ENCODE measurements at regions of chr20 and their contacts with region 1.

Region 1: DNA sequence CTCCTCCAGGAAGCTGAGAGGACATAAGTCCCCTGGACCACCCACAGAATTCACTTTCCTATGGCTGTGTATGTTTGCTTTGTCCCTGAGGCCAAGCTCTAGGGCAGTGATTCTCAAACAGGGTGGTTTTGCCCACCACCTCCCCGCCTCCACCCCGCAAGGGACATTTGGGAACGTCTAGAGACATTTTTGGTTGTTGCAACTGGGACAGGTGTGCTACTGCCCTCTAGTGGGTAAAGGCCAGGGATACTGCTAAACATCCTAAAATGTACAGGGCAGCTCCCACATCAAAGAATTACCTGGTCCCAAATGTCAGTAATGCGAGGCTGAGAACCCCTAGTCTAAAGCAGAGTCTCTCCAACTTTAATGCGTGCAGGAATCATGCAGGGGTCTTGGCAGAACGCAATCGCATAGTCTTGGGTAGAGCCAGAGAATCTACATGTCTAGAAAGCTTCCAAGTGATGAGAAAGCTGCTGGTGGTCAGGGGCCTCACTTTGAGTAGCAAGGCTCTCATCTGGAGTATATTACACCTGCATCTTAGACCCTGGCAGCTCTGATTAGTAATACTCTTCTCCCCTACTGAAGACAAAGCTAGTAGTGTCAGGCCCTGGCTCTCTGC is 5.1 kb downstream of the KCNS1 start:
- DNase-seq: peak; percentile 83
- H3K4me3 Mint-ChIP-seq: no peak overlapping the region
- H3K27ac Mint-ChIP-seq: no peak overlapping the region
- H3K4me1 Mint-ChIP-seq: peaks cover 10% of the 10 kb centered on the region
- H3K27me3 Mint-ChIP-seq: peaks cover 29% of the 10 kb centered on the region

Region 2: GRCh38 chr20:44747166-44748004 is 348.5 kb before region 1 on chr20:
- CTCF ChIA-PET with region 1: interaction called, 5 read pairs
- intact Hi-C with region 1: loop called (anchors 2 kb)
- DNase-seq: peak; percentile 89
- H3K4me3 Mint-ChIP-seq: peak overlapping the region; percentile 83
- H3K27ac Mint-ChIP-seq: peak overlapping the region; percentile 80
- H3K4me1 Mint-ChIP-seq: peaks cover 17% of the 10 kb centered on the region
- H3K27me3 Mint-ChIP-seq: peaks cover 11% of the 10 kb centered on the region

Region 3: GRCh38 chr20:44966030-44966961 is 129.6 kb before region 1 on chr20 and contains the start of gene STK4:
- CTCF ChIA-PET with region 1: interaction called, 4 read pairs
- intact Hi-C with region 1: loop called (anchors 2 kb)
- DNase-seq: peak; percentile 96
- H3K4me3 Mint-ChIP-seq: peak within 1 kb of the TSS; percentile 88
- H3K27ac Mint-ChIP-seq: peak within 1 kb of the TSS; percentile 98
- H3K4me1 Mint-ChIP-seq: peaks cover 56% of the 10 kb centered on the region
- H3K27me3 Mint-ChIP-seq: no peaks in the 10 kb centered on the region
- total RNA-seq, gene STK4: 110 to 116 TPM

Region 4: GRCh38 chr20:45052698-45053429 is 43.0 kb before region 1 on chr20:
- CTCF ChIA-PET with region 1: interaction called, 45 read pairs
- intact Hi-C with region 1: no loop called
- DNase-seq: peak; percentile 20
- H3K4me3 Mint-ChIP-seq: no peak overlapping the region
- H3K27ac Mint-ChIP-seq: peak overlapping the region; percentile 80
- H3K4me1 Mint-ChIP-seq: peaks cover 80% of the 10 kb centered on the region
- H3K27me3 Mint-ChIP-seq: no peaks in the 10 kb centered on the region

Region 5: GRCh38 chr20:45111799-45112471 is 16.1 kb after region 1 on chr20:
- CTCF ChIA-PET with region 1: interaction called, 53 read pairs
- intact Hi-C with region 1: no loop called
- DNase-seq: peak; percentile 38
- H3K4me3 Mint-ChIP-seq: no peak overlapping the region
- H3K27ac Mint-ChIP-seq: no peak overlapping the region
- H3K4me1 Mint-ChIP-seq: peaks cover 10% of the 10 kb centered on the region
- H3K27me3 Mint-ChIP-seq: no peaks in the 10 kb centered on the region

Measured in activated naive CD4-positive, alpha-beta T cell treated with anti-CD3 and anti-CD28 coated beads for 36 hours (primary cell).